ENCODE measurements at regions of chr9 and their contacts with region 1.

Region 1: DNA sequence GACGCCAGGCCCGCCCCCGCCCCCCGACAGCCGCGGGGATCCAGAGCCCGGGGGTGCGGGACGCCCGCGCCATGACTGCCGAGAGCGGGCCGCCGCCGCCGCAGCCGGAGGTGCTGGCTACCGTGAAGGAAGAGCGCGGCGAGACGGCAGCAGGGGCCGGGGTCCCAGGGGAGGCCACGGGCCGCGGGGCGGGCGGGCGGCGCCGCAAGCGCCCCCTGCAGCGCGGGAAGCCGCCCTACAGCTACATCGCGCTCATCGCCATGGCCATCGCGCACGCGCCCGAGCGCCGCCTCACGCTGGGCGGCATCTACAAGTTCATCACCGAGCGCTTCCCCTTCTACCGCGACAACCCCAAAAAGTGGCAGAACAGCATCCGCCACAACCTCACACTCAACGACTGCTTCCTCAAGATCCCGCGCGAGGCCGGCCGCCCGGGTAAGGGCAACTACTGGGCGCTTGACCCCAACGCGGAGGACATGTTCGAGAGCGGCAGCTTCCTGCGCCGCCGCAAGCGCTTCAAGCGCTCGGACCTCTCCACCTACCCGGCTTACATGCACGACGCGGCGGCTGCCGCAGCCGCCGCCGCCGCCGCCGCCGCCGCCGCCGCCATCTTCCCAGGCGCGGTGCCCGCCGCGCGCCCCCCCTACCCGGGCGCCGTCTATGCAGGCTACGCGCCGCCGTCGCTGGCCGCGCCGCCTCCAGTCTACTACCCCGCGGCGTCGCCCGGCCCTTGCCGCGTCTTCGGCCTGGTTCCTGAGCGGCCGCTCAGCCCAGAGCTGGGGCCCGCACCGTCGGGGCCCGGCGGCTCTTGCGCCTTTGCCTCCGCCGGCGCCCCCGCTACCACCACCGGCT is 1.0 kb downstream of the FOXE1 start:
- DNase-seq: peak; percentile 48
- H3K4me3 Mint-ChIP-seq: peak overlapping the region; percentile 74
- H3K27ac Mint-ChIP-seq: peak overlapping the region; percentile 42
- H3K4me1 Mint-ChIP-seq: peaks cover 18% of the 10 kb centered on the region
- H3K27me3 Mint-ChIP-seq: peaks cover 80% of the 10 kb centered on the region

Region 2: DNA sequence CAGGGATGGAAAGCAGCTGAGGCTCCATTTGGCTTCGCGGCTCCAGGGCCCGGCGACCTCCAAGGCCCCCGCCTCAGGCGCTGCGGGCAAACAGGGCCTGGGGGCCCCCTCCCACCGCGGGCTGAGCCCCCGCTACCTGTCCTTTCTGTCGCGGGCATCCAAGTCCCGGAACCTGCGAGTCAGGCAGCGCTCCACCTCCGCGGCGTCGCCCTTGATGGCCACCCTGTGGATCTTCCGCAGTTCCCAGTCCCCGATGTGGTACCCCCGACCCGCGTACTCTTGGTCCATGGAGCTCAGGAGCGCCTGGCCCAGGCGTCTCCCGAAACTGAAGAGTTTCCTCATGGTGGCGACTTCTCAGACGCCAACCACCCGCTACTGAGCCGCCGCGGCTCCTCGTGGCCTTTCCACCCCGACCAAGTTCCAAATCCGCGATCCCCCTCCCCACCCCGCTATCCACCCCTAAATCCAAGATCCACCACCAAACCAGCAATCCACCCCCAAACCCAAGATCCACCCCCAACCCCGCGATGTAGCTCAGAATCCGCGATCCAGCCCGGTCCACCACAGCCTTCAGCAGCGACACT is 633.1 kb before region 1 on chr9:
- intact Hi-C with region 1: loop called (anchors 10 kb)
- DNase-seq: no peak
- H3K4me3 Mint-ChIP-seq: peak overlapping the region; percentile 70
- H3K27ac Mint-ChIP-seq: peak overlapping the region; percentile 23
- H3K4me1 Mint-ChIP-seq: peaks cover 5% of the 10 kb centered on the region
- H3K27me3 Mint-ChIP-seq: peaks cover 61% of the 10 kb centered on the region

Region 3: GRCh38 chr9:97501177-97501971 is 352.7 kb before region 1 on chr9 and contains the start of gene TMOD1:
- intact Hi-C with region 1: loop called (anchors 10 kb)
- DNase-seq: peak; percentile 28
- H3K4me3 Mint-ChIP-seq: peak within 1 kb of the TSS; percentile 78
- H3K27ac Mint-ChIP-seq: peak within 1 kb of the TSS; percentile 31
- H3K4me1 Mint-ChIP-seq: peaks cover 25% of the 10 kb centered on the region
- H3K27me3 Mint-ChIP-seq: peaks cover 52% of the 10 kb centered on the region
- total RNA-seq, gene TMOD1: 0.81 and 0.86 TPM in 2 replicates

Region 4: DNA sequence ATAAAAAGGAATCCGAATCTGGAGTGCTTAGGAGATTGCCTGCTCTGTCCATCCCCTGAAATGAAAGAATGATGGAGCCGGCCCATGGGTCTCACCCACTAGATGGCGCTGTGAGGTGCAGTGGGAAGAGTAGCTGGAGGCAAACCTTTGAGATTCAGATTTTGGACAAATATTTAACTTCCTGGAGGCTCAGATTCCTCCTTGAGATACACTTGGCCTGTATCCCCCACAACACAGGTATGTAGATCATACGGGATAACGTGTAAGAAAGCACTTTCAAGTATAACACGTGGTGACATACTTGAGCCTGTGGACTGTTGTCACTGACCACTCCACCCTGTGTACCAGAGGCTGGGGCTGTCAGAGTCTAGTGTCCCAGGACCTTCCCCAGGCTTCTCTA is 36.0 kb after region 1 on chr9:
- intact Hi-C with region 1: no loop called
- DNase-seq: peak; percentile 51
- H3K4me3 Mint-ChIP-seq: no peak overlapping the region
- H3K27ac Mint-ChIP-seq: no peak overlapping the region
- H3K4me1 Mint-ChIP-seq: peaks cover 6% of the 10 kb centered on the region
- H3K27me3 Mint-ChIP-seq: peaks cover 4% of the 10 kb centered on the region

Region 5: GRCh38 chr9:97900738-97901565 is 46.9 kb after region 1 on chr9:
- intact Hi-C with region 1: loop called (anchors 5 kb)
- DNase-seq: no peak
- H3K4me3 Mint-ChIP-seq: no peak overlapping the region
- H3K27ac Mint-ChIP-seq: no peak overlapping the region
- H3K4me1 Mint-ChIP-seq: peaks cover 48% of the 10 kb centered on the region
- H3K27me3 Mint-ChIP-seq: no peaks in the 10 kb centered on the region

Region 6: DNA sequence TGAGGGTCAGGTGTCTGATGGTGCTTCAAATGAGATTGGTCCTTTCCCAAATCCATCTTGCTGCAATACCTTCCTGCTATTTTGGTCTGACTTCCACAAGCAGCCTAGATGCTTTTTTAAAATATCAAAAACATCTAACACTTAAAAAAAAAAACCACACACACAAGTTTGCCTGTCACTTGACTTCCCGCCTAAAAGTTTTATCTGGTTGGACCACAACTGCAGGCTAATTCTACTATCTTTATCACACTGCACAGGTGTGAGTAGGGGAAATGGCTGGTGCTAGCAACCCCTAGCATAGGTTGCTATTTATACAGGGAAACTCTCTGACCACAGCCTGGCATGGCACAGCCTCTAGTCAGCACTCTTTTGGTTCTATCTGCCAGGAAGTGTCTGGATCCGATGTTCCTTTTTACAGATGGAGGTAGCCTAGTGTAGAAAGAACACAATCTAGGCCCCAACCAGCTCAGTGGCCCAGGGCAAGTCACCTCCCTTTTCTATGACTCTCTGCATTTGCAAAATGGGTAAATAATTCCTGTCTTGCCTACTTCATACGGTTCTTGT is 84.1 kb after region 1 on chr9 and contains the start of gene HEMGN:
- intact Hi-C with region 1: no loop called
- DNase-seq: no peak
- H3K4me3 Mint-ChIP-seq: no peak within 1 kb of the TSS
- H3K27ac Mint-ChIP-seq: peak within 1 kb of the TSS; percentile 10
- H3K4me1 Mint-ChIP-seq: peaks cover 19% of the 10 kb centered on the region
- H3K27me3 Mint-ChIP-seq: peaks cover 3% of the 10 kb centered on the region
- total RNA-seq, gene HEMGN: 0.24 and 0.31 TPM in 2 replicates

Region 7: DNA sequence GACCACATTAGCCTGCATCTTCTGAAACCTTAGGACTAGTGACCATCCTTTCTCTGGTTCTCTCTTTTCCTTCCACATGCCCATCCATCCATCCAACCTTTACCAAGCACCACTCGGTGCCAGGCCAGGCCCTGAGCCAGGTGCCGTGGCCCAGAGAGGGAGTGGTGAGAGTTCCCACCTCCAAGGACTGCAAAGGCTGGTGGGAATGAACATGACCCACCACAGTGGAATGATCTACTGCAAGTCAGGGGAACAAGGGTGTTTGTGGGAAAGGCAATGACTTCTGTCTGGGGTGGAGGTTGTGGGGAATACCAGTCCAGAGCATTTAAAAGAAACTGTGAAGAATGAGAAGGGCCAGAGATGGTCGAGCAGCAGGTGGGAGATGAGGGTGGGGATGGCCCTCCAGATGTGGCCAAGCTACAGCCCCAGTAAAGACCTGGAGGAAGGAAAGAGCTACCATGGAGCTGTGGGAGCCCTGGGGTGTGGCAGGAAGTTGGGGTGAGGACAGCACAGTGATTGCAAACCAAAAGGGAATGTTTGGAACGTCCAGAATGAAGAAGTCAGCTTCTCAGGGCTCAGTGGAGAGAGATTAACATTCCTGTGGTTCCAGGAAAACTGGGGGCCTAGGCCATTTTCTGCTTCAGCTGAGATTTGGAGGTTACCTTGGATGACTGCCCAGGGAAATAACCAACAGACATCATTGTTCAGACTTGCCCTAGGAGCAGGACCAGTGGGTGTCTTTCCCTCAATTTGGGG is 369.0 kb after region 1 on chr9:
- intact Hi-C with region 1: no loop called
- DNase-seq: no peak
- H3K4me3 Mint-ChIP-seq: no peak overlapping the region
- H3K27ac Mint-ChIP-seq: no peak overlapping the region
- H3K4me1 Mint-ChIP-seq: no peaks in the 10 kb centered on the region
- H3K27me3 Mint-ChIP-seq: no peaks in the 10 kb centered on the region

Measured in activated T-helper 1 cell treated with anti-CD3 and anti-CD28 coated beads, Interleukin-12 subunit alpha, Interleukin-12 subunit beta, Interleukin-2, Interleukin-4 antibody, amounts not matched to agents 30 ng/mL and 10 ng/mL and 1 ng/mL, durations not matched to agents 14 hours and 24 hours and 36 hours (primary cell).